ENCODE measurements at regions of chr17 and their contacts with region 1.

Region 1: DNA sequence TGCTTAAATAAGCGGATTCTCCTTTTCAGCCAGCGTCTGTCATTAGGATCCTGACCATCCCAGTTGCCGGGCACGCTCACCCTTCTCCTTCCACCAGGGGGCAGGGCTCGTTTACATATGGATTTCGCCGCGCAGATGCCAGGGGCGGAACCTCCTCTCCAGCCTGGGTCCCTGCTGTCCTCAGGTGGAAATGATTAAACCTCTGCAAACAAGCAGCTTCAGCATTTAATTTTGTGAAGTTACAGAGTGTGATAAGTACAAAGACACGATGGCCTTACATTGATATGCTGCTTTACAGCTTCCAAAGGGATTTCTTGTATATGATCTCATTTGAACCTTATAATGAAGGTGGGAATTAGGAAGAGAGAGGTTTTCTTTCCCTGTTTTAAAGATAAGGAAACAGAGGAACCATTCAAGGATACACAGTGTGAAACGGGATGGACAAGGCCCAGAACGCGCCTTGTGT is 3.9 kb upstream of the KRT28 start:
- H3K4me3 ChIP-seq: no peak overlapping the region
- H3K27ac ChIP-seq: no peak overlapping the region
- H3K4me1 ChIP-seq: no peaks in the 10 kb centered on the region
- CTCF ChIP-seq: peak; percentile 71; the same call in 1 of the 2 replicates

Region 2: GRCh38 chr17:40818733-40819527 is 15.3 kb after region 1 on chr17:
- CTCF ChIA-PET with region 1: interaction called, 11 read pairs
- POLR2A ChIA-PET with region 1: interaction called, 10 read pairs
- H3K4me3 ChIP-seq: peak overlapping the region; percentile 79
- H3K27ac ChIP-seq: peak overlapping the region; percentile 79
- H3K4me1 ChIP-seq: peaks cover 2% of the 10 kb centered on the region; the same call in 1 of the 2 replicates
- CTCF ChIP-seq: no peak

Region 3: DNA sequence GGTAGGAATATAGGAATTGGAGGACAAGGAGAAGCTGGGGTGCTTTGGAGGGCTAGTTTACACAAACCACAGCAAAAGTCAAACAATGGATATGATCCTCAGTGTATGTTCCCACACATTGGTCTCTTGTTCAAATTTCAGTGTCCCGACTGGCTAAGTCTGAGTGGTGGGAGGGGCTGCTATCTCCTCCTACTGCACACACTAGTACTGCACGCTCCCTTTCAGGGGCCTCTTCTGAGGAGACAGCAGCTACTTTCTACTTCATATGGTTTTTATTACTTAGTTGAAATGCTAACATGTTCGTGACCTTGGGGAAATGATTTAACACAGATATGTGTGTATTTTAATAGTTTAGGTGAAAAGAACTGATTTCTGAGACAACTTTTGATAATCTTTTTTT is 37.6 kb after region 1 on chr17:
- CTCF ChIA-PET with region 1: no interaction called
- POLR2A ChIA-PET with region 1: no interaction called
- H3K4me3 ChIP-seq: no peak overlapping the region
- H3K27ac ChIP-seq: no peak overlapping the region
- H3K4me1 ChIP-seq: no peaks in the 10 kb centered on the region
- CTCF ChIP-seq: no peak

Region 4: DNA sequence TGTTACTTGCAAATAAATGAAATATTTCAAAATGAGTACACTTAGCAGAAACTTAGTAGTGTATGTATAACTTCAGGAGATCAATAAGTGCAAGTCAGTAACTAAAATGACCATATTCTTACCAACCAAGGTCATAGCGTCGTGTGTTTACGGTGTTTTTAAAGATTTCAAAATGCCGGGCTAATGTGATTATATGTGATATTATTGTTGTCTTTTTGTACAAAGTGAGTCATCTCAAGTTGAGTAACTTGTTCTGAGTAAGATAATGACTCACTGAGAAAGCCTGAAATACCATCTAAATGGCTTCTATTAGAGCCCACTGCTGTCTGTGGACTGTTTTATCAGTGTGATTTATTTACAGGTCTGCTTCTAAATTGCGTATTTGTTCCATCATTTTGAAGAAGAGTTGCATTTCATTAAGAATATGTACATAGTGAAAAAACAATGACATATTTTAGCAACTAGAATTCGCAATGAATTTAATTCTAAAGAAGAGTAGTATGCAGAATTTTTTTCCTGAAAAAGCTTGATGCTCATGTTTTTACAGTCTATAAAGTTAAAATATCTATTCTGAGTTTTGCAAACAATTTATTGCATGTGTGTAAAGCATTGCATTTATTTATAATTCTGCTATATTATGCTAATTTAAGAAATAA is 50.6 kb after region 1 on chr17:
- CTCF ChIA-PET with region 1: interaction called, 16 read pairs
- POLR2A ChIA-PET with region 1: no interaction called
- H3K4me3 ChIP-seq: no peak overlapping the region
- H3K27ac ChIP-seq: no peak overlapping the region
- H3K4me1 ChIP-seq: peaks cover 5% of the 10 kb centered on the region
- CTCF ChIP-seq: no peak